Aorta (tissue), 5 donors: ENCODE measurements at regions of chr19 and their contacts with region 1.

Region 1: DNA sequence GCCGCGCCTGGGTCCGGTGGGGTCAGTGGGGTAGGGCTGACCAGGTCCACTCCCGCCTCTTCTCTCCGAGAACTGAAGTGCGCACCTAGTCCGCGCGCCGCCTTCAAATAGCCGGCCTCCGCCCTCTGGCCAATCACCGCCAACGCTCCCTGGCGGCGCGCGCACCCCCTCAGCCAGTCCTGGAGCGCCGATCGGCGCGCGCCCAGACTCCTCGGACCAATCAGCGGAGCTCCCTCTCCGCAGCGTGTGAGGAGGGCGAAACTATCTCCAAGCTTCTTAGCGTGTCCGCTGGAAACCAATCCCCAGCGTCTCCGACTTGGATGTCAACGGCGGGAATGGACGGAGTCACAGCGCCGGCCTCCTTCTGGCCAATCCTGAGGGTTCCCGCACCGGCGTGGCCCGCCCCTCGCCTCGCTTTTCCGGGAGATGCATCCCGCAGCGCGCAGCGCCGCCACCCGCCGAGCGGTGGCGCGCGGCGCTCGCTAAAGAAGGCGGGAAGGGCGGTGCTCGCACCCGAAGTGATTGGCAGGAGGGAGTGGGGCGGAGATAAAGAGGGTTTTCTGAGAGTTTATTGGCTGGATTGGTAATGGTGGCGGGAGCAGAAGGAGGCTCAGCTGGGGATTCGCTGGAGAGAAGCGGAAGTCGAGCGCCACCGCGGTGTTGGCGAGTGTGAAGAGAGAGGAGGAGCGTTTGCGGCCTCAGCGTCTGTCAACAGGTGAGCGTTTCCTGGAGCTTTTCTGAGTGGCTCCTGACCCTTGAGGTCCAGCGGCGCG is at the start of gene ASF1B:
- DNase-seq: peak; percentile 99 to 100
- ATAC-seq: peak; percentile 97
- H3K4me3 ChIP-seq: peak within 1 kb of the TSS; percentile 64 to 65
- H3K27ac ChIP-seq: peak within 1 kb of the TSS; percentile 57 to 80
- H3K4me1 ChIP-seq: no peaks in the 10 kb centered on the region
- H3K27me3 ChIP-seq: no peaks in the 10 kb centered on the region
- total RNA-seq, gene ASF1B: 1.4 to 2.0 TPM

Region 2: GRCh38 chr19:14006243-14006765 is 130.4 kb before region 1 on chr19 and contains the start of gene RFX1:
- intact Hi-C with region 1: loop called in 1 of 2 experiments (anchors 2 kb)
- DNase-seq: peak; percentile 100
- ATAC-seq: peak; percentile 95
- H3K4me3 ChIP-seq: peak within 1 kb of the TSS; percentile 64 to 98
- H3K27ac ChIP-seq: peak within 1 kb of the TSS; percentile 87 to 92
- H3K4me1 ChIP-seq: no peaks in the 10 kb centered on the region
- H3K27me3 ChIP-seq: no peaks in the 10 kb centered on the region
- total RNA-seq, gene RFX1: 11.6 to 17.7 TPM

Region 3: GRCh38 chr19:14081325-14082093 is 55.2 kb before region 1 on chr19:
- intact Hi-C with region 1: loop called (anchors 5 kb)
- DNase-seq: peak; percentile 99 to 100
- ATAC-seq: peak; percentile 96
- H3K4me3 ChIP-seq: peak overlapping the region; percentile 68 to 80
- H3K27ac ChIP-seq: peak overlapping the region; percentile 28 to 80
- H3K4me1 ChIP-seq: no peaks in the 10 kb centered on the region
- H3K27me3 ChIP-seq: no peaks in the 10 kb centered on the region

Region 4: GRCh38 chr19:14091081-14091812 is 45.4 kb before region 1 on chr19:
- intact Hi-C with region 1: loop called in 1 of 2 experiments (anchors 2 kb)
- DNase-seq: peak; percentile 77 to 93
- ATAC-seq: peak; percentile 85
- H3K4me3 ChIP-seq: peak overlapping the region; percentile 76 to 96
- H3K27ac ChIP-seq: peak overlapping the region; percentile 46 to 93
- H3K4me1 ChIP-seq: no peaks in the 10 kb centered on the region
- H3K27me3 ChIP-seq: no peaks in the 10 kb centered on the region

Region 5: DNA sequence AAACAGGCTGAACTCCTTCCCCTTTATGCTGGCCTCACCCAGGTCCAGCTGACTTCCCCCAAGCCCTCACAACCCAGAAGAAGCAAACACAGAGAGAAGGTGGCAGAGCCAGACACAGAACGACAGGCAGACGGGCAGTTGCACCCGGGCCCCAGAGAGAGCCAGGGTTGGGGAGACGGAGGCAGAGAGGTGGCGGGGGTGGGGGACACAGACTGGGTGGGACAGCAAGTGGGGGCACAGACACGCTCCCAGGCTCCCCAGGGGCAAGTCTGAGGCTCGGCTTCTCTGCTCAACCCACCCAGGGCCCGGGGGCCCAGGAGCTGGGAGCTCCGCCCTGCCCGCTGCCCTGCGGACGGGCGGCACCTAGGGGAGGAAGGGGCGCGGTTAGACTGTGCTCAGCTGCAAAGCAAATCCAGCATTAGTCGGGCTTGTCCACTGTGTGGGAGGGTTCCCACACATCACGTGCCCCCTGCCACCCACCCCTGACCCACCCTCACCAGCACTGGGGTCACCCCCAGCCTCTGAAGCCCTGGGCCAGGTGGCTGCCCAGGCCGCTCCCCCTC is 31.0 kb after region 1 on chr19:
- intact Hi-C with region 1: no loop called
- DNase-seq: no peak
- ATAC-seq: peak; percentile 58
- H3K4me3 ChIP-seq: no peak overlapping the region
- H3K27ac ChIP-seq: no peak overlapping the region
- H3K4me1 ChIP-seq: no peaks in the 10 kb centered on the region
- H3K27me3 ChIP-seq: no peaks in the 10 kb centered on the region